ENCODE measurements at regions of chr11 and their contacts with region 1.

Region 1: DNA sequence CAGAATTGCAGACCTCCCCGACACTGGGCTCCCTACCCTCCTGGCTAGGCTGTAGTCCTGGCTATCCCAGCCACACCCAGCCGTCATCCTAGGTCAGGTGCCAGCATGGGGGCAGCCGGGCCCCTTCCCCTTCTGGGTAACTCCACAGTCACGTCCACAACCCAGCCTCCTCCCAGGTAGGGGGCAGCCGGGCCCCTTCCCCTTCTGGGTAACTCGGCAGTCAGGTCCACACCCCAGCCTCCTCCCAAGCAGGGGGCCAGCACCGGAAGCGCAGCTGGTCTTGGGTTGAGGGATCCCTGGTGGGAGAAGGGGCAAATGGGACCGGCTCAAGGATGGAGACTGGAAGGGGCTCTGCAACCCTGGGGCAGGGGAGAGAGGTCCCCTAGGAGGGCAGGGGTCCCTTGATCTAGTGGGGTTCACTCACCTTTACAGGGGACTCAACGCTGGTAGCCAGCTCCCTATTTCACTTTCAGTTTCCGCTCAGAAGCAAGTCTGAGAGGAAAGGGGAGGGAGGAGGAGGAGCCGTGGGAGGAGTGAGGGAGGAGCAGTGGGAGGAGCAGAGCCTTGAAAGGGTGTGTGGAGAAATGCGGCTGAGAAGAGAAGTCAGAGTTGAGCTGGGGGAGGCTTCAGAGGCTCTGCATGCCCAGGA is at the start of gene TRIM21:
- DNase-seq: peak; percentile 87 to 92 (median 89)
- H3K4me3 ChIP-seq: peak within 1 kb of the TSS; percentile 90 to 91
- H3K4me3 Mint-ChIP-seq: peak within 1 kb of the TSS; percentile 80 to 96 (median 94)
- H3K27ac ChIP-seq: peak within 1 kb of the TSS; percentile 89
- H3K27ac Mint-ChIP-seq: peak within 1 kb of the TSS; percentile 47 to 95 (median 94)
- H3K4me1 ChIP-seq: peaks cover 32% of the 10 kb centered on the region
- H3K4me1 Mint-ChIP-seq: peaks cover 30 to 56% (median 38%) of the 10 kb centered on the region in 4 donors
- H3K27me3 ChIP-seq: no peaks in the 10 kb centered on the region
- H3K27me3 Mint-ChIP-seq: peaks cover 5 to 15% of the 10 kb centered on the region in 2 donors
- total RNA-seq, gene TRIM21: 30.9 to 32.3 TPM

Region 2: DNA sequence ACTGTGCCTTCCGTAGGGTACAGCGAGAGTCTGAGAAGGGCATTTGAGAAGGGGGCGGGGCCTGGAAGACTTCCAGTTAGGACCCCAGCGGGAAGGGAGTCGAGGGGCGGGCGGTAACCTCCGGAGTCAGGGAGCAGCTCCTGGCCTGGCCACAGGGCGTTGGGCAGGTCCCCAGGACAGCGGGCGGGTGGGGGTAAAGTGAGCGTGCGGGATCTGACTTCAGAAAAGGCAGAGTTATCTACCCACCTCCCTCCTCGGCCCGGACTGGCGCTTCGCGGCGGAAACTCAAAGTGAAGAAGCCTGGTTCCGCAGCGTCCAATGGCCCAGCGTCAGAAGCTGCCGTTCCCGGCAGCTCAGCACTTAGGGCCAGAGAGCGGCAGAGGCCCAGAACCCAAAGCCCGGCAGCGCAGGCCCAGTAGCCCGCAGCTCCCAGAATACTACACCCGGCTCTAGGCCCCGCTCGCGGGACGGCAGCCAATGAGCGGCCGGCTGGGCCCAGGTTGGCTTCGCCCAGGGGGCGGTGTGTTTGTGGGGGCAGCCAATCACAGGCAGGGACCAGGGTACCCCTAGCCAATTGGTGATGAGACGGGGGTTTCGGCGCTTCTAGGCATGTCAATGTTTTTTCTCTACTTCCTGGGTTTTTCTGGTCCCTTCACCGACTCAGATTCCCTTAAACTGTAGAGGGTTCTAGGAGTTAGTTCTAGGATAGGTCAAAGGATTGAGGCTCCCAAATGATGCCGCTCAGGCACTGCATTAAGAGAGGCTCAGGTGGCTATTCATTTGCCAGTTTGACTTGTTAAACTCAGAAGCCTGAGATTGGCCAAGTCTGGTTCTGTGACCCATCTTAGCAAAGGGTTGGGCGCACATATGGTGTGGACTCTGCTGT is 214.7 kb after region 1 on chr11 and contains the start of gene TRIM68:
- CTCF ChIA-PET with region 1: no interaction called
- POLR2A ChIA-PET with region 1: interaction called, 5 read pairs
- intact Hi-C with region 1: loop called (anchors 2 kb)
- DNase-seq: peak; percentile 94 to 96 (median 94)
- H3K4me3 ChIP-seq: peak within 1 kb of the TSS; percentile 32 to 79
- H3K4me3 Mint-ChIP-seq: peak within 1 kb of the TSS; percentile 93 to 98 (median 96)
- H3K27ac ChIP-seq: peak within 1 kb of the TSS; percentile 82
- H3K27ac Mint-ChIP-seq: peak within 1 kb of the TSS; percentile 88 to 98 (median 97)
- H3K4me1 ChIP-seq: peaks cover 39% of the 10 kb centered on the region
- H3K4me1 Mint-ChIP-seq: peaks cover 35 to 64% (median 46%) of the 10 kb centered on the region in 4 donors
- H3K27me3 ChIP-seq: no peaks in the 10 kb centered on the region
- H3K27me3 Mint-ChIP-seq: no peaks in the 10 kb centered on the region
- total RNA-seq, gene TRIM68: 23.7 to 28.1 TPM